Heart left ventricle (tissue), 16 donors: ENCODE measurements at regions of chr4 and their contacts with region 1.

Region 1: GRCh38 chr4:113547487-113548042 is 214.0 kb downstream of the CAMK2D start:
- DNase-seq: peak; percentile 83 to 90 (median 86)
- ATAC-seq: peak; percentile 94 to 99 (median 98)
- H3K4me3 ChIP-seq: no peak overlapping the region
- H3K27ac ChIP-seq: peak overlapping the region in 11 of 12 donors; percentile 23 to 75 (median 56)
- H3K4me1 ChIP-seq: peaks cover 0 to 19% (median 12%) of the 10 kb centered on the region in 12 donors
- H3K27me3 ChIP-seq: no peaks in the 10 kb centered on the region
- CTCF ChIP-seq: peak; percentile 91 to 99 (median 97)
- POLR2A ChIP-seq: no peak

Region 2: GRCh38 chr4:113179996-113180395 is 367.6 kb before region 1 on chr4:
- intact Hi-C with region 1: no loop called
- DNase-seq: no peak
- ATAC-seq: peak in 3 of 4 donors; percentile 37 to 54 (median 41)
- H3K4me3 ChIP-seq: no peak overlapping the region
- H3K27ac ChIP-seq: peak overlapping the region in 8 of 12 donors; percentile 1 to 50 (median 13)
- H3K4me1 ChIP-seq: peaks cover 0 to 60% (median 19%) of the 10 kb centered on the region in 12 donors
- H3K27me3 ChIP-seq: no peaks in the 10 kb centered on the region
- CTCF ChIP-seq: no peak
- POLR2A ChIP-seq: no peak

Region 3: DNA sequence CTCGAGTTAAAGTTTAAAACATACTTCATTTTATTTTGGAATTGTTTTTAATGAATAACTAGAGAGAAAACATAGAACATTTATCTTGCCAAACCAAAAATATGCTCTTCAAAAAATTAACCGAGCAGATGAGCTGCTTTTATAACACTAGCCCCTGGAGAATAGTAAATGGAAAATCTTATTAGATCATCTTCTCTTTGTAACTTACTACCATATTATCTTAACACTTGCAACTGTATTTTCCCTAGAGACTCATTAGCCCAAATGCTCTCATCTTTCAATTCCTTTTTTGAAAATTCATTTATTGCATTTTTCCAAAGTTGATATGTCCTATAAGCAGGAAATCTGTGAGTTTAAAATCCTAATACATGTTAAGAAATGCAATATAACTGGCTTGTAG is 70.6 kb after region 1 on chr4:
- intact Hi-C with region 1: loop called in 1 of 10 experiments (anchors 10 kb)
- DNase-seq: no peak
- ATAC-seq: peak in 1 of 4 donors; percentile 34
- H3K4me3 ChIP-seq: no peak overlapping the region
- H3K27ac ChIP-seq: peak overlapping the region in 8 of 12 donors; percentile 29 to 68 (median 55)
- H3K4me1 ChIP-seq: peaks cover 0 to 67% (median 26%) of the 10 kb centered on the region in 12 donors
- H3K27me3 ChIP-seq: no peaks in the 10 kb centered on the region
- CTCF ChIP-seq: no peak
- POLR2A ChIP-seq: no peak

Region 4: GRCh38 chr4:113901994-113902787 is 354.6 kb after region 1 on chr4:
- intact Hi-C with region 1: loop called in 1 of 10 experiments (anchors 10 kb)
- DNase-seq: no peak
- ATAC-seq: no peak
- H3K4me3 ChIP-seq: no peak overlapping the region
- H3K27ac ChIP-seq: no peak overlapping the region
- H3K4me1 ChIP-seq: peaks cover 0 to 7% (median 0%) of the 10 kb centered on the region in 12 donors
- H3K27me3 ChIP-seq: no peaks in the 10 kb centered on the region
- CTCF ChIP-seq: no peak
- POLR2A ChIP-seq: no peak